Endothelial cell of umbilical vein (primary cell): ENCODE measurements at regions of chr5 and their contacts with region 1.

Region 1: DNA sequence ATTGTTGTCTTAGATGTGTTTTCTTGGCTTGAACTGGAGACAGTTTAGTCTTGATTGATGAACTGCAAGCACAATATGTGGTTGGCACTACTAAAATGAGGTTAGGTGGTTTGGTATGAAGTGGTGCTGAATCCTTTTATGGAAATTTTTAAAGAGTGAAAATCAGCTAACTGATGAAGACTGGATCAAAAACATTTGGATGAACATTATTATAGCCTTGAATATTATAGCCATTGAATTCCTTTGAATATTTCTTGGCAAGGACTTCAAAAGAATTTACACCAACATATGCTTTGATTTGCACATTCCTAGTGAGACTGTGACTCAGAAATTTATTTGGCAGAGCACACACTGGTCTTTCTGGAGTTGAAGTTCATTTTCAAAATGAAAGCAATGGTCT is 318.3 kb downstream of the CHSY3 start:
- DNase-seq: peak; percentile 60
- H3K4me3 ChIP-seq: no peak overlapping the region
- H3K27ac ChIP-seq: no peak overlapping the region
- H3K4me1 ChIP-seq: peaks cover 2% of the 10 kb centered on the region
- H3K27me3 ChIP-seq: no peaks in the 10 kb centered on the region
- CTCF ChIP-seq: no peak
- POLR2A ChIP-seq: no peak

Region 2: DNA sequence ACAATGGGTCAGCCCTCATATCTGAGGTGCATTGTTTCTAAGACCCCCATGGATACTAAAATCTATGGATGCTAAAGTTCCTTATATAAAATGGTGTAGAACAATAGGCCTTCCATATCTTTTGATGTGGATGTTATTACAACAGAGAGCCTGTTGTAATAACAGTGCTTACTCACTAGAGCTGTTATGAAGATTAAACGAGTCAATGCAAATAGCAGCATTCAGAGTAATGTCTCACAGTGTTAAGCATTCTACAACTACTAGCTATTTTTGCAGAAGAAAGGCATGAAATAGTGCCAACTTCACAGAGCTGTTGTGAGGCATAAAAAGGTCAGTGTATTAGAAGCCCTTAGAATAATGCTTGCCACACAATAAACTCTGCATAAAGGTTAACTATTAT is 305.3 kb before region 1 on chr5:
- CTCF ChIA-PET with region 1: no interaction called
- POLR2A ChIA-PET with region 1: no interaction called
- dilution Hi-C with region 1: no loop called
- intact Hi-C with region 1: no loop called
- DNase-seq: no peak
- H3K4me3 ChIP-seq: no peak overlapping the region
- H3K27ac ChIP-seq: no peak overlapping the region
- H3K4me1 ChIP-seq: no peaks in the 10 kb centered on the region
- H3K27me3 ChIP-seq: no peaks in the 10 kb centered on the region
- CTCF ChIP-seq: no peak
- POLR2A ChIP-seq: no peak

Region 3: GRCh38 chr5:130183115-130183514 is 39.5 kb before region 1 on chr5:
- CTCF ChIA-PET with region 1: no interaction called
- POLR2A ChIA-PET with region 1: no interaction called
- dilution Hi-C with region 1: no loop called
- intact Hi-C with region 1: no loop called
- DNase-seq: no peak
- H3K4me3 ChIP-seq: no peak overlapping the region
- H3K27ac ChIP-seq: no peak overlapping the region
- H3K4me1 ChIP-seq: no peaks in the 10 kb centered on the region
- H3K27me3 ChIP-seq: no peaks in the 10 kb centered on the region
- CTCF ChIP-seq: no peak
- POLR2A ChIP-seq: no peak

Region 4: DNA sequence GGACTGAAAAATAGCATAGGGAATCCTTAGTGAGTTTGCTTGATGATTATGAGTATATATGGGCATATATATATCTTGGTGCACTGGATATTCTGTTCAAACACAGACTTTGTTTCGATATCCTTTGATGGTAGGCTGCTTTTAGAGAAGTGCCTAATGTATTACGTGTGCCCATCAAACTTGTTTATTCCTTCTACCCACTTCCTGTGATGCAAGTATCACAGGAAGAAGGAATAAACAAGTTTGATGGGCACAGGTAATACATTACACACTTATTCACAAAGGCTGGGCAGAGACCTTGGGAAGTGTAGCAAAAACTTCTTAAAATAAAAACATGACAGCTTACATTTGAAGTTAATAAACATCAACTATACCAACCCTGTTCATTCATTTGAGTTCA is 45.9 kb after region 1 on chr5:
- CTCF ChIA-PET with region 1: no interaction called
- POLR2A ChIA-PET with region 1: no interaction called
- dilution Hi-C with region 1: no loop called
- intact Hi-C with region 1: loop called (anchors 1 kb)
- DNase-seq: no peak
- H3K4me3 ChIP-seq: no peak overlapping the region
- H3K27ac ChIP-seq: no peak overlapping the region
- H3K4me1 ChIP-seq: no peaks in the 10 kb centered on the region
- H3K27me3 ChIP-seq: no peaks in the 10 kb centered on the region
- CTCF ChIP-seq: no peak
- POLR2A ChIP-seq: no peak